ENCODE measurements at regions of chr11 and their contacts with region 1.

Region 1: DNA sequence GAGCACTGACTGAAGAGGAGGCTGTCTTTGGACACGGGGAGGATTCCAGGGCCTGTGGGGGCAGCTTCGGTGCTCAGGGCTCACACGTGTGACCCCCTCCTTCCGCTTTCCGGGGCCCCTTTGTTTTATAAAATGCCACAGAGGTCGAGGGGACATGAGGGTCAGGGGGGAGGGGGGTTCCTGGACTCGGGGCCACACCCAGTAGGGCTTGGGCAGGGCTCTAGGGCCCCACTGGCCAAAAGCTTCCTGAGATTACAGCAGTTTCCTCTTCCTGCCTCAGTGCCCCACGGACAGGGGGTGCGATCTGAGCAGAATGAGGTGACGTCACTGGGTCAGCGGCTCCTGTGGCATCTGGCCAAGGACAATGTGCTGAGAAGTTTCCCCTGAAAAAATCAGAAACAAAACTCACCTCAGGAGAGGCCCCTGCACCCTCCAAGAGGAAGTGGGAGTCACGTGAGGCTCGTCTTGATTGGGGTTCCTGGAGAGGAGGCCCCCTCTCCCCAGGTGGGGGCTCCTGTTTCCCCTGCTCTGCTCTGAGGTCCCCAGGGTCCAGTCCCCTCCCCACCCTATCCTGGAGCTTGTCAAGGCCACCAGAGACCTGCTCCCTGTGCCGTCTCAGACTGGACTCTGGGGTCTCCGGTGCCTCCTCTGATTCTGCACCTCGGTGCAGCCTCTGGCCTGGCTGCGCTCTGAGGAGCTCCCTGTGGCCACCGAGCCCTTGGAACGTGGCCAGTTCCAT is 6.4 kb upstream of the IFITM3 start:
- DNase-seq: peak in 8 of 9 experiments; percentile 42 to 93 (median 77)
- ATAC-seq: peak; percentile 62
- H3K4me3 ChIP-seq: peak overlapping the region; percentile 6 to 9
- H3K4me3 Mint-ChIP-seq: peak overlapping the region; percentile 67
- H3K27ac ChIP-seq: peak overlapping the region; percentile 69 to 81
- H3K27ac Mint-ChIP-seq: peak overlapping the region; percentile 95
- H3K4me1 ChIP-seq: peaks cover 85% of the 10 kb centered on the region
- H3K4me1 Mint-ChIP-seq: peaks cover 76% of the 10 kb centered on the region
- H3K27me3 ChIP-seq: no peaks in the 10 kb centered on the region
- H3K27me3 Mint-ChIP-seq: no peaks in the 10 kb centered on the region
- CTCF ChIP-seq: no peak

Region 2: GRCh38 chr11:257766-258493 is 69.1 kb before region 1 on chr11:
- CTCF ChIA-PET with region 1: no interaction called
- POLR2A ChIA-PET with region 1: no interaction called
- intact Hi-C with region 1: no loop called
- DNase-seq: peak in 1 of 9 experiments; percentile 14
- ATAC-seq: no peak
- H3K4me3 ChIP-seq: no peak overlapping the region
- H3K4me3 Mint-ChIP-seq: no peak overlapping the region
- H3K27ac ChIP-seq: no peak overlapping the region
- H3K27ac Mint-ChIP-seq: no peak overlapping the region
- H3K4me1 ChIP-seq: no peaks in the 10 kb centered on the region
- H3K4me1 Mint-ChIP-seq: no peaks in the 10 kb centered on the region
- H3K27me3 ChIP-seq: no peaks in the 10 kb centered on the region
- H3K27me3 Mint-ChIP-seq: no peaks in the 10 kb centered on the region
- CTCF ChIP-seq: no peak

Region 3: GRCh38 chr11:313787-314547 is 13.0 kb before region 1 on chr11 and contains the start of gene IFITM1:
- CTCF ChIA-PET with region 1: interaction called, 8 read pairs
- POLR2A ChIA-PET with region 1: interaction called, 10 read pairs
- intact Hi-C with region 1: loop called in 1 of 2 experiments (anchors 2 kb)
- DNase-seq: peak in 7 of 9 experiments; percentile 54 to 86 (median 71)
- ATAC-seq: peak; percentile 49
- H3K4me3 ChIP-seq: peak within 1 kb of the TSS; percentile 95 to 97
- H3K4me3 Mint-ChIP-seq: peak within 1 kb of the TSS; percentile 95
- H3K27ac ChIP-seq: peak within 1 kb of the TSS; percentile 83 to 88
- H3K27ac Mint-ChIP-seq: peak within 1 kb of the TSS; percentile 98
- H3K4me1 ChIP-seq: peaks cover 18% of the 10 kb centered on the region
- H3K4me1 Mint-ChIP-seq: peaks cover 45% of the 10 kb centered on the region
- H3K27me3 ChIP-seq: no peaks in the 10 kb centered on the region
- H3K27me3 Mint-ChIP-seq: no peaks in the 10 kb centered on the region
- CTCF ChIP-seq: no peak
- total RNA-seq, gene IFITM1: 223 to 251 TPM

Region 4: DNA sequence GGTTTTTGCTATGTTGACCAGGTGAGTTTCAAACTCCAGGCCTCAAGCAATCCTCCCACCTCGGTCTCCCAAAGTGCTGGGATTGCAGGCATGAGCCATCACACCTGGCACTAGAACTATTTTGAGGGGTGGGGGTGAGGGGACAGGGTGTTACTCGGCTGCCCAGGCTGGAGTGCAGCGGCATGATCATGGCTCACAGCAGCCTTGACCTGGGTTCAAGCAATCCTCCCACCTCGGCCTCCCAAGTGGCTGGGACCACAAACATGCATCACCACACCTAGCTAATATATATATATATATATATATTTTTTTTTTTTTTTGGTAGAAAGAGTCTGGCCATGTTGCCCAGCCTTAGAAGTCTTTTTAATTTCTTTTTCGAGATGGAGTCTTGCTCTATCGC is 10.7 kb after region 1 on chr11:
- CTCF ChIA-PET with region 1: interaction called, 11 read pairs
- POLR2A ChIA-PET with region 1: interaction called, 7 read pairs
- intact Hi-C with region 1: no loop called
- DNase-seq: no peak
- ATAC-seq: no peak
- H3K4me3 ChIP-seq: no peak overlapping the region
- H3K4me3 Mint-ChIP-seq: no peak overlapping the region
- H3K27ac ChIP-seq: no peak overlapping the region
- H3K27ac Mint-ChIP-seq: no peak overlapping the region
- H3K4me1 ChIP-seq: peaks cover 39% of the 10 kb centered on the region
- H3K4me1 Mint-ChIP-seq: peaks cover 36% of the 10 kb centered on the region
- H3K27me3 ChIP-seq: no peaks in the 10 kb centered on the region
- H3K27me3 Mint-ChIP-seq: no peaks in the 10 kb centered on the region
- CTCF ChIP-seq: no peak

Measured in CD8-positive, alpha-beta T cell (primary cell).